ENCODE measurements at regions of chr9 and their contacts with region 1.

Region 1: GRCh38 chr9:135893104-135893503 is 14.2 kb downstream of the CAMSAP1 start:
- DNase-seq: no peak
- H3K4me3 ChIP-seq: no peak overlapping the region
- H3K27ac ChIP-seq: no peak overlapping the region
- H3K4me1 ChIP-seq: peaks cover 57% of the 10 kb centered on the region
- H3K27me3 ChIP-seq: no peaks in the 10 kb centered on the region
- CTCF ChIP-seq: no peak
- POLR2A ChIP-seq: no peak

Region 2: GRCh38 chr9:135743546-135744332 is 149.4 kb before region 1 on chr9:
- intact Hi-C with region 1: no loop called
- DNase-seq: no peak
- H3K4me3 ChIP-seq: no peak overlapping the region
- H3K27ac ChIP-seq: no peak overlapping the region
- H3K4me1 ChIP-seq: no peaks in the 10 kb centered on the region
- H3K27me3 ChIP-seq: no peaks in the 10 kb centered on the region
- CTCF ChIP-seq: no peak
- POLR2A ChIP-seq: no peak

Region 3: DNA sequence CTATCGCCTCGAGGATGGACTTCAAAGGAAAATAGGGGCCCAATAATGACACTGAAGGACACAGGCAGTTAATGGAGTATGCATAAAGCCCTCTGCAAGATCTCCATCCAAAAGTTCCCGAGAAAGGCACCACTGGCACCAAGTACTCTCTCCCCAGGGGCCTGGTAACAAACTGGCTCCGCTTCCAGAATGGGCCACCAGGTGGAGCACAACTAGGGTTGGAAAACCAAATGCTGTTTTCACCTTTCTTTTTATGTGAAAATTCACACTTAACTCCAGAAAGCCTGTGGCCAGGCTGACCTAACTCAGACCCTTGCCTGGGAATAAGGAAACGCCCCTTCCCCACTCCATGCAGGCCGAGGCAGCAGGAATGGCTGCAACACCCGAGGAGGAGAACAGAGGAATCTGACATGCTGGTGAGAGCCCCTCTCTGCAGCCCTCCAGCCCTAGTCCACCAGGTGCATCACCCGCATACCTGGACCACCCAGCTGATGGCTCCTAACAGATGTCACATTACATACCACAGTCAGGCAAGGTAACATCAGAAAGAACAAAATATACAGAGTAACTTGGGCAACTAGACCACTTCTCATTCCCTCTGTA is 28.6 kb before region 1 on chr9:
- intact Hi-C with region 1: loop called (anchors 2 kb)
- DNase-seq: no peak
- H3K4me3 ChIP-seq: no peak overlapping the region
- H3K27ac ChIP-seq: no peak overlapping the region
- H3K4me1 ChIP-seq: no peaks in the 10 kb centered on the region
- H3K27me3 ChIP-seq: no peaks in the 10 kb centered on the region
- CTCF ChIP-seq: peak; percentile 44 to 65 (median 60)
- POLR2A ChIP-seq: no peak

Measured in vagina (tissue), 2 donors.